Activated naive CD4-positive, alpha-beta T cell treated with anti-CD3 and anti-CD28 coated beads for 36 hours (primary cell): ENCODE measurements at regions of chr1 and their contacts with region 1.

Region 1: DNA sequence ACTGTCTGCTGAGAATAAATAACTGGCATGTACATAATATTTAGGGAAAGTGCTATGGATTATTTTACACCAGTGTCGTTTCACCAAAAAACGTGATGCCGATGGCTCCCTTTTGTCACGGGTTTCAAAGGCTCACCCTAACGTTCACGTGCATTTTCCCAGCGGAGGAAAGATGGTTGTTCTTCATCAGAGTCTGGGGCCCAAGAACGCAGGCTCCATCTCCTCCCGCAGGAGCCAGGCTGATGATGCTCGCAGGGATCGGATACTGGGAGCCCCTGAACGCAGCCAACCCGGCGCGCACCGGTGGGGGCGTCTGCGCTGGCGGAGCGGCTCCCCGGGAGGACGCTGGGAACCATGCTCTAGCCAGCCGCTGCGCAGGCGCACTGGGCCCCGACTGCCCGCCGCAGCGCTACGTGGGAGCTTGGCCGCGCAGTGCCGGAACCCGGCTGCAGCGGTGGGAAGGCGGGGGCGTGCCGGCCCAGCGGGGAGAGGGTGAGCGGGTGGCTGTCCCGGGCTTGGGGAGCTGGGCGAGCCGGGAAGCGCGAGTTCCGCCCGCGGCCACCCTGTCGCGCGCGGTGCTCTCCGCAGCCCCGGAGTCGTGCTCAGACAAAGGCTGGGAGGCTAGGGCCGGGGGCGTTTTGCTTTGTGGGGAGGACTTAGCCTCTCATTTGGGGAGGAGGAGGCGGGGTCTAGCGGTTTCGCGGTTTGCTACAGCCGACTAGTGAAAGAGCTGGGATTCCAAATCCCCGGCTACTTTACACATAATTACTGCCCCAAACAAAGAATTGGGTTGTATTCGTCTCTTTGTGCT is at the start of gene ZFP69B:
- DNase-seq: peak; percentile 95
- H3K4me3 Mint-ChIP-seq: peak within 1 kb of the TSS; percentile 80
- H3K27ac Mint-ChIP-seq: peak within 1 kb of the TSS; percentile 93
- H3K4me1 Mint-ChIP-seq: peaks cover 32% of the 10 kb centered on the region
- H3K27me3 Mint-ChIP-seq: no peaks in the 10 kb centered on the region
- total RNA-seq, gene ZFP69B: 11.2 to 11.3 TPM

Region 2: DNA sequence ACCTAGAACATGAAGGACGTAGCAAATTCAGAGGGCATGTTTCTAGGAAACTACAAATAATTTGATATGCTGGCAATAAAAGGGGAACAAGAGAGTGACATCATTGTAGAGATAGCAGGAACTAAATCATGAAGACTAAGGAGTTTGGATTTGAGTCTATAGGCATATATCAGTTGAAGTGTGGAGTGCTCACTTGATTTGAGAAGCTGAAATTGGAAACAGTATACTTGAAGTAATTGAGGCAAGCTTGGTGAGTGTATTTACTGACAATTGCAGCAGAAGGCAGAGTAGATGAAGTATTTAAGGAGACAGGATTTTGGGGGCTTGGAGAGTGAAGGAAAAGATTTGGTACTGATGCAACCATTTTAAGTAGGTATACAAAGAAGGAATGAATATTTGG is 208.5 kb before region 1 on chr1:
- CTCF ChIA-PET with region 1: no interaction called
- intact Hi-C with region 1: loop called (anchors 1 kb)
- DNase-seq: no peak
- H3K4me3 Mint-ChIP-seq: peak overlapping the region; percentile 20
- H3K27ac Mint-ChIP-seq: peak overlapping the region; percentile 89
- H3K4me1 Mint-ChIP-seq: peaks cover 51% of the 10 kb centered on the region
- H3K27me3 Mint-ChIP-seq: no peaks in the 10 kb centered on the region

Region 3: DNA sequence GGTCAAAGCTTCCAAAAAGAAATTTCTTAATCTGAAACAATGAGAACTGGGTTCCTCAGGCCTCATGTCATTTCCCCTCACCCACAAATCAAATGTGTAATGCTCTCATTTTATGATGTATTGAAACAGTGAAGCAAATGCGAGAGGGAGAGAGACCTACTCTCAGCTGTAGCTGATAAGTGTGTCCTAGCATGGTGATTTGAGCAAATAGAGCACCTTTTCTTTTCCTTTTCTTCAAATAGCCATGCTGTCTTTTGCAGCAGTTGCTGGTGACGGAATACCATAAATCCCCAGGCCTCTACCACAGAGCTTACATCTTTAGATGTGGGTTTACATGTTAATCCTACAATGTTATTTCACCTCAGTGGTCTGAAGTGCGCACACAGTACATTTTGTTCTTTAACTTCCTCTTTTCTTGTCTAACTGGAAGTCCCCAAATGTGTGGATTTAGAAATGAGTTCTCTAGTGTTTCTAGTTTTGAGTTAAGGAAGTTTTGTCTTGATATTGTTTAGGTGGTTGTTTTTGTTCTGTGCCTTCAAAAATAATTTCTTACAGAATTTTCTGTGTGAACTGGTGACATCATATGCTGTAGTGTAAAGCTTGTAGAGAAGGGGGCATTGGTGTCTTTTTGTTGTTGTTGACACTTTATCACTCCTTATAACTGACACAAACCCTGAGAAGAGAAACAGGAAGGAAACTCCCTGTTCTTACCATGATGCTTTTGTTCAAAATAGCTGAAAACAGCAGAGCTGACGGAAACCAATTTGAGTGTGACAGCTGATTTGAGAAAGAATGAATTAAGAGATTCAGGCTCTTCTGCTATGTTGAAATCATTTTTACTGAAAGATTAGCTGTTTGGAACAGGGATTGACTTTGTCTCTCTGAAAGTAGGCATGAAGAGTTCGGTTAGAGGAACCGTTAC is 64.2 kb before region 1 on chr1:
- CTCF ChIA-PET with region 1: no interaction called
- intact Hi-C with region 1: loop called (anchors 1 kb)
- DNase-seq: peak; percentile 85
- H3K4me3 Mint-ChIP-seq: peak overlapping the region; percentile 80
- H3K27ac Mint-ChIP-seq: peak overlapping the region; percentile 99
- H3K4me1 Mint-ChIP-seq: peaks cover 88% of the 10 kb centered on the region
- H3K27me3 Mint-ChIP-seq: no peaks in the 10 kb centered on the region

Region 4: GRCh38 chr1:40438391-40439015 is 11.4 kb before region 1 on chr1:
- CTCF ChIA-PET with region 1: interaction called, 10 read pairs
- intact Hi-C with region 1: no loop called
- DNase-seq: peak; percentile 33
- H3K4me3 Mint-ChIP-seq: no peak overlapping the region
- H3K27ac Mint-ChIP-seq: no peak overlapping the region
- H3K4me1 Mint-ChIP-seq: peaks cover 6% of the 10 kb centered on the region
- H3K27me3 Mint-ChIP-seq: no peaks in the 10 kb centered on the region

Region 5: DNA sequence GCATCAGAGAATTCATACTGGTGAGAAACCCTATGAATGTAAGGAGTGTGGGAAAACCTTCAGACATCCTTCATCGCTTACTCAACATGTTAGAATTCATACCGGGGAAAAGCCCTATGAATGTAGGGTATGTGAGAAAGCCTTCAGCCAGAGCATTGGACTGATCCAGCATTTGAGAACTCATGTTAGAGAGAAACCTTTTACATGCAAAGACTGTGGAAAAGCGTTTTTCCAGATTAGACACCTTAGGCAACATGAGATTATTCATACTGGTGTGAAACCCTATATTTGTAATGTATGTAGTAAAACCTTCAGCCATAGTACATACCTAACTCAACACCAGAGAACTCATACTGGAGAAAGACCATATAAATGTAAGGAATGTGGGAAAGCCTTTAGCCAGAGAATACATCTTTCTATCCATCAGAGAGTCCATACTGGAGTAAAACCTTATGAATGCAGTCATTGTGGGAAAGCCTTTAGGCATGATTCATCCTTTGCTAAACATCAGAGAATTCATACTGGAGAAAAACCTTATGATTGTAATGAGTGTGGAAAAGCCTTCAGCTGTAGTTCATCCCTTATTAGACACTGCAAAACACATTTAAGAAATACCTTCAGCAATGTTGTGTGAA is 13.2 kb after region 1 on chr1:
- CTCF ChIA-PET with region 1: no interaction called
- intact Hi-C with region 1: no loop called
- DNase-seq: no peak
- H3K4me3 Mint-ChIP-seq: no peak overlapping the region
- H3K27ac Mint-ChIP-seq: no peak overlapping the region
- H3K4me1 Mint-ChIP-seq: no peaks in the 10 kb centered on the region
- H3K27me3 Mint-ChIP-seq: no peaks in the 10 kb centered on the region

Region 6: DNA sequence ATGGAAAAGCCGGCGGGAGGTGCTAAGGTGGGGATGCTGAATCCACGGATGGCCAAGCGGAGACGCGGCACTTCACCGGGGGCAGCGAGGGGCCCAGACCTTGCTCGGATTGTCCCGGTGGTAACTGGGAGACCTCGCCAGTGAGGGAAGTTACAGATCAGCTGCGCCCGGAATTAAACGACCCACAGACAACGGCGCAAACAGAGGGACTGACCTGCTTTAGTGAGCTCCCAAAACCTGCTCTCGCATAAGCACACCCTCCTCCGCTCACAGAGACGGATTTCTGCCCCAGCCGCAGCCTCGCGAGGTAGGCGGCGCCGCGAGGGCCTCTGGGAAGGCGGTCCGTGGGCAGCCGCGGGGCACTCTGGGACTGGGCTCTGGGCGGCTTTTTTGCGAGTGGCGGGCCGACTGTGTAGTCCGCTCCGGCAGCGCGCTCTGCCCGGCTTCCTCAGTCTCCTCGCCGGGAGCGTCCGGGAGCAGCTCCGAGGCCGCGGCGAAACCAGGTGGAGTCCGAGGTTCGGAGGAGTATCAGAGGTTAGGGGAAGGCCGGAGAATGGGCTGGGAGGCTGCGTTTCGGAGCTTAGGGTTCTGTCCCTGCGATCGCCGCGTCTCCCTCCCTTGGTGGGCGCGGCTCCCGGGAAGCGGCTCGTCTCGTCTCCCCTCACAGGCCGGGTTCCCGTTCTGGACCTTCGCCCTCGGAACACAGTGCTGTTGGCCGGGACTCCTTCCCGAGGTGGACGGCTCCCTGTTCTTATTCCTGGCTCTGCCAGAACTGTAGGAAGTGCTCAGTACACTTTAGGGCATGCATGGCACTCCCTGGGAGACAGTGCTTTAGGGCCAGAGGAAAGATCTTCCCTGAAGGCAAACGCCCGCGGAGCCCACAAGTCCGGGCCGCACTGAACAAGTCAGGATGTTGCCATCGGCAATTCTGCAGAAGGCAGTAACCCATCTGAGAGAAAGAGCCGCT is 58.8 kb after region 1 on chr1 and contains the start of gene EXO5:
- CTCF ChIA-PET with region 1: no interaction called
- intact Hi-C with region 1: loop called (anchors 1 kb)
- DNase-seq: peak; percentile 90
- H3K4me3 Mint-ChIP-seq: peak within 1 kb of the TSS; percentile 80
- H3K27ac Mint-ChIP-seq: peak within 1 kb of the TSS; percentile 81
- H3K4me1 Mint-ChIP-seq: peaks cover 10% of the 10 kb centered on the region
- H3K27me3 Mint-ChIP-seq: no peaks in the 10 kb centered on the region
- total RNA-seq, gene EXO5: 9.4 to 9.9 TPM